ENCODE measurements at regions of chr1 and their contacts with region 1.

Region 1: DNA sequence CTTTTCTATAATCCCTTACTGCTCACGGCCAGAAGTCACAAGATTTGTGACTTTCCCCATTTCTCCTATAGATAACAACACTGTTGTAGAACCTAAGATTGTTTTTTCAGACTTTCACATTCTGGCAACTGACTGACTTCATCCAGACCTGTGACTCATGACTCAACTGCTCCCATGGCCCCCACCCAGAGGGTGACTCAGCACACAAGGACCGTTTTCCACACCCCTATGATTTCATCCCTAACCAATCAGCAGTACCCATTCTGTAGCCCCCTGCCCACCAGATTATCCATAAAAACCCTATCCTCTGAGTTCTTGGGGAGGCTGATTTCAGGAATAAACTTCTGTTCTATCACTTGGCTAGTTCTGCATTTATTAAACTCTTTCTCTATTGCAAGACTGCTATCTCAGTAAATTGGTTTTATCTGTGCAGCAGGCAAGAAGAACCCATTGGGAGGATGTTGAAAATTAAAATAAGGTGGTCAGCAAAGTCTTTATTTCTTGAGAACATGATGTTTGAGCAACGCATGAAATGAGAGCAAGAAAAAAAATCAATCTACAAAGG is 79.7 kb downstream of the NGF start:
- DNase-seq: peak; percentile 73
- H3K4me3 ChIP-seq: no peak overlapping the region
- H3K27ac ChIP-seq: no peak overlapping the region
- H3K4me1 ChIP-seq: no peaks in the 10 kb centered on the region
- H3K27me3 ChIP-seq: no peaks in the 10 kb centered on the region
- CTCF ChIP-seq: no peak

Region 2: DNA sequence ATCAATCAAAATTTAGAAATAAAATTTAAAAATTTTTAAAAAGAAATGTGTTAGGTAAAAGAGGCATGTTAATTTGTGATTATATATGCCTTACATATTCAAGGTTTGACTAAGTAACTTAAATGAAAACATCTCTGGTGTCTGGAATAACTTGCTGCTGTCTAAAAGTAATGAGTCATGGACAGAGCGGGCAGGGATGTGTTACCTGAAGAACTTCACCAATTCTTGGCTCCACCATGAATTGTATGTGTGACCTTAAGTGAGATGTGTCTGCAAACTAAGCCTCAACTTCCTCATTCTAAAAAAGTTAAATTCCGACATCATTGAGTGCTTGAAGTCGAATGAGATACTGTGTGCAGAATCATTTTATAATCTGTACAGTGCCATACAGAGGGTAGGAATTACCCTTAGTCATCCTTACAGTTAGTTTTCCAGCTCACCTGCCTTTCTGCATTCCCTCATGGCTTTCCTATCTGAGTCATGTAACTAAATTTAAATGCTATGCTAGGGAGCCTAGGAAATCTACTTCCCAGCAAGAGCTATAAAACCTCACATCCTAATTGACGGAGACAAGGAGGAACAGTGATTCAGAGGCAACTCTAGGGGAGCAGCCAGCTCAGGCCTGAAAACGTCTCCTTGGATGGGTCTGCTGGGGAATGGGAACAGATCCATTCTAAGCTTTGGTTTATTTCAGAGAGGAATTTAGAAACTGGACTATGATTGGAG is 68.4 kb before region 1 on chr1:
- CTCF ChIA-PET with region 1: no interaction called
- dilution Hi-C with region 1: no loop called
- in situ Hi-C with region 1: no loop called
- intact Hi-C with region 1: loop called (anchors 2 kb)
- DNase-seq: peak; percentile 90
- H3K4me3 ChIP-seq: no peak overlapping the region
- H3K27ac ChIP-seq: peak overlapping the region; percentile 78
- H3K4me1 ChIP-seq: peaks cover 27% of the 10 kb centered on the region
- H3K27me3 ChIP-seq: no peaks in the 10 kb centered on the region
- CTCF ChIP-seq: no peak

Region 3: DNA sequence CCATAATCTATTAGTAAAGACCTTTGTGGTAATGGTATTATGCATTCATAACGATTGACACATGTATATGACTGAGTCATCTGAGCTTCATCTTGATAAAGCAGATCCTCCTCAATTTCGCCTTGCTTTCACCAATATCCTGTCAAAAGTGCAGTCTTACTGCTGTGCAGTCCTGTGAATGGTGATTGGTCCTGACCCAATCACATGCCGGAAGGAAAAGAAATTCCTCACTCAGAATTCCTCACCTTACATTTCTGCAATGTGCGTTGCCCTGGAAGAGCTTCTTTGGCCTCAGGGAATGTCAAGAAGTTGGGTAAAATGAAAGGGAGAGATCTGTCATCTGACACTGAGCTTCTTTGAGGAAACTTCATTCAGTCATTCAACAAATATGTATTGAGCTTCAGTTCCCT is 48.1 kb before region 1 on chr1:
- CTCF ChIA-PET with region 1: no interaction called
- dilution Hi-C with region 1: no loop called
- in situ Hi-C with region 1: no loop called
- intact Hi-C with region 1: loop called (anchors 1 kb)
- DNase-seq: peak; percentile 81
- H3K4me3 ChIP-seq: no peak overlapping the region
- H3K27ac ChIP-seq: no peak overlapping the region
- H3K4me1 ChIP-seq: peaks cover 19% of the 10 kb centered on the region
- H3K27me3 ChIP-seq: no peaks in the 10 kb centered on the region
- CTCF ChIP-seq: no peak

Region 4: GRCh38 chr1:115219937-115220336 is 38.4 kb before region 1 on chr1:
- CTCF ChIA-PET with region 1: no interaction called
- dilution Hi-C with region 1: no loop called
- in situ Hi-C with region 1: no loop called
- intact Hi-C with region 1: loop called (anchors 5 kb)
- DNase-seq: no peak
- H3K4me3 ChIP-seq: no peak overlapping the region
- H3K27ac ChIP-seq: no peak overlapping the region
- H3K4me1 ChIP-seq: peaks cover 28% of the 10 kb centered on the region
- H3K27me3 ChIP-seq: no peaks in the 10 kb centered on the region
- CTCF ChIP-seq: no peak

Measured in mammary epithelial cell (primary cell).